Cardiac septum (tissue), 1 donor: ENCODE measurements at regions of chr6 and their contacts with region 1.

Region 1: GRCh38 chr6:121780325-121781313 is 345.2 kb downstream of the GJA1 start:
- DNase-seq: peak; percentile 81

Region 2: GRCh38 chr6:121826156-121826810 is 45.7 kb after region 1 on chr6:
- intact Hi-C with region 1: loop called (anchors 5 kb)
- DNase-seq: no peak

Region 3: GRCh38 chr6:121839896-121840295 is 59.3 kb after region 1 on chr6:
- intact Hi-C with region 1: loop called (anchors 5 kb)
- DNase-seq: no peak